ENCODE measurements at regions of chr10 and their contacts with region 1.

Region 1: DNA sequence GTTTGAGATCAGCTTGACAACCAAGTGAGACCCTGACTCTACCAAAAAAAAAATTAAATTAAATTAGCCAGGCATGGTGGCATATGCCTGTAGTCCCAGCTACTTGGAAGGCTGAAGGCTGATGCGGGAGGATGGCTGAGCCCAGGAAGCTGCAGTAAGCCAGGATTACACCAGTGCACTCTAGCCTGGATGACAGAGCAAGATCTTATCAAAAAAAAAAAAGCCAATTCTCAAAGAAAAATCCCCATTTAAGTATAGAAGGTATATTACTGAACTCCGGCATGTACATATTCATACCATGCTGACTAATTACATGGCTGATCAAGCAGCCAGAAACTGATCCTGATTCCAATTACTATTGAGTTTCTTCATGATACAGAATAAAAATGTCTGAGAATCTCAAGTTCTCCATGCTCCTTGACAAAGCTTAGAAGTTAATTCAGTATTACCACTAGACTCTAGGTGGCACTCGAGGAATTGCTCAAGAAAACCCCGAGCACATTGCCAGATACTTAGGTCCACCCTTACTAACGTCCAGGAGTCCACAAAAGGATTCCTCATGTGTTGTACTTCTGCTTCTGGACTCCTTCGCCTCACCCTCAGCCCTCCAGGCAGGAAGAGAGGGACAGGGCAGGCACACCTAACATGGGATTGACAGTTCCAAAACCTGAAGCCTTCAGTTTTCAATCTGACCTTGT is 148.9 kb downstream of the PARD3 start:
- DNase-seq: peak; percentile 41 to 78 (median 50)
- ATAC-seq: peak; percentile 97
- H3K4me3 ChIP-seq: no peak overlapping the region
- H3K27ac ChIP-seq: peak overlapping the region; percentile 48; the same call in 2 of the 3 replicates
- H3K4me1 ChIP-seq: peaks cover 6% of the 10 kb centered on the region in 2 experiments; a peak in 4 of 5 replicates
- H3K27me3 ChIP-seq: no peaks in the 10 kb centered on the region; a peak in 1 of 5 replicates
- CTCF ChIP-seq: peak; percentile 50 to 74 (median 67)
- EP300 ChIP-seq: peak; percentile 27; the same call in 1 of the 2 replicates
- POLR2A ChIP-seq: no peak
- RAD21 ChIP-seq: peak; percentile 67 to 76

Region 2: GRCh38 chr10:34547291-34547690 is 118.9 kb before region 1 on chr10:
- CTCF ChIA-PET with region 1: no interaction called
- POLR2A ChIA-PET with region 1: no interaction called
- in situ Hi-C with region 1: no loop called
- intact Hi-C with region 1: no loop called
- DNase-seq: no peak
- ATAC-seq: no peak
- H3K4me3 ChIP-seq: no peak overlapping the region
- H3K27ac ChIP-seq: no peak overlapping the region
- H3K4me1 ChIP-seq: no peaks in the 10 kb centered on the region
- H3K27me3 ChIP-seq: no peaks in the 10 kb centered on the region; a peak in 1 of 5 replicates
- CTCF ChIP-seq: no peak
- EP300 ChIP-seq: no peak
- POLR2A ChIP-seq: no peak
- RAD21 ChIP-seq: no peak

Region 3: DNA sequence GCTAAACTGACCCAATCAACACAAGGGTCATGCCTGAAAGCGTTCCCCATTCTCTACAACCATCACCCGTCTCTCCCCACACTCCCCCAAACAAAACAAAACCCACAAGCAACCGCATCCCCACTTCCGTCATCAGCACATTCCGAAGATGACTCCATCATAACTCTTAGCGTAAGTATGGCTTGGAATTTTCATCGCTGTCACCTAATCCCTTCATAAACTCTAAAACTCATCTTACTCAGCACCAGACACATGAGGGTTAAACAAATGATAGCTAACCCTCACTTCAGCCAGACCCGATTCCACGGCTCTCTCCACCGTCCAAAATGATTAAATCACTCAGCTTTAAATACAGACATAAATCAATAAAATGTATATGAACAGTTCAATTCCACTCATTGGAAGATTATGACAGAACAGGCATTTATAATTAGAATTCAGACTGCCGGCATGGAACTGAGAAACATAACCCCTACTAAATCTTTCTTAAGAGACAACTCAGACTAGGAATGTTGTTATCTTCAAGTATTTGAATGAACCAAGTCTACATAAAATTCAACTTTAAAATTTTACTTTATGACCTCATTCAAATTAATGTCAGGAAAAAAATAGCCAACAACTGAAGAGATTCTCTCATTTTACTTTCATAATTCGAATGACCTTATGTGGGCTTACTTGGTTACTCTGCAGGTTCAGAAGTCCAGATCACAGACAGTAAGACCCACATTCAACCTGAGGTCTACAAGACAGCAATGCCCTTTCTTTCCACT is 66.9 kb before region 1 on chr10:
- CTCF ChIA-PET with region 1: no interaction called
- POLR2A ChIA-PET with region 1: no interaction called
- in situ Hi-C with region 1: no loop called
- intact Hi-C with region 1: no loop called
- DNase-seq: no peak
- ATAC-seq: no peak
- H3K4me3 ChIP-seq: no peak overlapping the region
- H3K27ac ChIP-seq: no peak overlapping the region
- H3K4me1 ChIP-seq: no peaks in the 10 kb centered on the region
- H3K27me3 ChIP-seq: 0 out of 5 replicates have a peak, but pooled peaks cover 0 to 2% of the 10 kb centered on the region in 2 experiments
- CTCF ChIP-seq: no peak
- EP300 ChIP-seq: no peak
- POLR2A ChIP-seq: no peak
- RAD21 ChIP-seq: no peak

Region 4: GRCh38 chr10:34739915-34740314 is 73.8 kb after region 1 on chr10:
- CTCF ChIA-PET with region 1: no interaction called
- POLR2A ChIA-PET with region 1: no interaction called
- in situ Hi-C with region 1: no loop called
- intact Hi-C with region 1: loop called (anchors 10 kb)
- DNase-seq: peak in 2 of 4 experiments; percentile 27 to 35
- ATAC-seq: peak; percentile 86
- H3K4me3 ChIP-seq: no peak overlapping the region
- H3K27ac ChIP-seq: no peak overlapping the region
- H3K4me1 ChIP-seq: peaks cover 0 to 4% of the 10 kb centered on the region in 2 experiments; a peak in 3 of 5 replicates
- H3K27me3 ChIP-seq: peaks cover 0 to 6% of the 10 kb centered on the region in 2 experiments; a peak in 1 of 5 replicates
- CTCF ChIP-seq: no peak
- EP300 ChIP-seq: no peak
- POLR2A ChIP-seq: no peak
- RAD21 ChIP-seq: no peak

Region 5: DNA sequence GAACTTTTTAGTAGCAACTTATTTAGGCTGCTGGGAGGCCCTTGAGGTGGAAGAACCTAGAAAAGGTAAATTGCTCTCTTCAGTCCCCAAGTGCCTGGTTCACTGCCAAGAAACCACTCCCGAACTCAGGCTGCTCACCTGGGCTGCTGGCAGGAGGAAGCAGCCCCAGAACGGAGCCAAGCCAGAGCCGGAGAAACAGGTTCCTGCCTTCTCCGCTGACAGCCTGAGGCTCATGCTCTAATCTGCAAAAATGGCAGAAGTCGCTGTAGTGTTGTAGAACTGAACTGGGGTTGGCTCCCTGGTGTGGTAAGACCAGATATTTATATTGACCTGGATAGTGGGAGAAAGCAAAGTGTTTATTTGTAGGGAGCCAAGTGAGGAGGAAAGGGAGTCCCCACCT is 288.0 kb after region 1 on chr10:
- CTCF ChIA-PET with region 1: no interaction called
- POLR2A ChIA-PET with region 1: no interaction called
- in situ Hi-C with region 1: no loop called
- intact Hi-C with region 1: loop called (anchors 10 kb)
- DNase-seq: no peak
- ATAC-seq: no peak; the same call in 2 of the 3 replicates
- H3K4me3 ChIP-seq: no peak overlapping the region
- H3K27ac ChIP-seq: no peak overlapping the region
- H3K4me1 ChIP-seq: no peaks in the 10 kb centered on the region
- H3K27me3 ChIP-seq: peaks cover 9 to 42% of the 10 kb centered on the region in 2 experiments; a peak in 4 of 5 replicates
- CTCF ChIP-seq: no peak
- EP300 ChIP-seq: no peak
- POLR2A ChIP-seq: no peak
- RAD21 ChIP-seq: no peak

Region 6: DNA sequence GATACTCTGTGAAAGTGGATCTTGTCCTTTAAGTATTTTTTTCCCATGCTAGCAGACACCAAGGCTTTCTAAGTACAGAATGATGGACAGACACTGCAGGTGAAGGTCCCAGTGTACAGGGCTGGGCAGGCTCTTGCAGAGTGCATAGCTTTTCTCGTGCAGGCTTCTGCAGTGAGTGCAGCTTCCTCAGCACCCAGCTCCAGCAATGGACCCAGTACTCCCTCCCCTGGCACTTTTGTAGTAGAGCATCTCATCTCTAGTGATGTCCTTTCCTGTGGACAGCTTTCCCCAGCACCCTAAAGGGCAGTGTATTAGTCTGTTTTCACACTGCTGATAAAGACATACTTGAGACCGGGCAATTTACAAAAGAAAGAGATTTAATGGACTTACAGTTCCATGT is 319.7 kb after region 1 on chr10:
- CTCF ChIA-PET with region 1: no interaction called
- POLR2A ChIA-PET with region 1: no interaction called
- in situ Hi-C with region 1: loop called (anchors 10 kb)
- intact Hi-C with region 1: no loop called
- DNase-seq: no peak
- ATAC-seq: peak; percentile 29; the same call in 2 of the 3 replicates
- H3K4me3 ChIP-seq: no peak overlapping the region
- H3K27ac ChIP-seq: no peak overlapping the region
- H3K4me1 ChIP-seq: no peaks in the 10 kb centered on the region
- H3K27me3 ChIP-seq: no peaks in the 10 kb centered on the region
- CTCF ChIP-seq: peak in 2 of 3 experiments; percentile 10 to 12; a peak in 1 of 6 replicates
- EP300 ChIP-seq: no peak
- POLR2A ChIP-seq: no peak
- RAD21 ChIP-seq: peak in 1 of 2 experiments; percentile 30; a peak in 1 of 4 replicates

Region 7: GRCh38 chr10:35212856-35213255 is 546.7 kb after region 1 on chr10:
- CTCF ChIA-PET with region 1: no interaction called
- POLR2A ChIA-PET with region 1: no interaction called
- in situ Hi-C with region 1: loop called (anchors 5 kb)
- intact Hi-C with region 1: loop called (anchors 2 kb)
- DNase-seq: no peak
- ATAC-seq: no peak
- H3K4me3 ChIP-seq: no peak overlapping the region
- H3K27ac ChIP-seq: no peak overlapping the region
- H3K4me1 ChIP-seq: peaks cover 0 to 4% of the 10 kb centered on the region in 2 experiments; a peak in 2 of 5 replicates
- H3K27me3 ChIP-seq: no peaks in the 10 kb centered on the region
- CTCF ChIP-seq: no peak
- EP300 ChIP-seq: no peak
- POLR2A ChIP-seq: no peak
- RAD21 ChIP-seq: no peak

Region 8: GRCh38 chr10:35218339-35218955 is 552.3 kb after region 1 on chr10:
- CTCF ChIA-PET with region 1: interaction called, 3 read pairs
- POLR2A ChIA-PET with region 1: no interaction called
- in situ Hi-C with region 1: loop called (anchors 5 kb)
- intact Hi-C with region 1: loop called (anchors 2 kb)
- DNase-seq: peak; percentile 43 to 90 (median 58)
- ATAC-seq: peak; percentile 87
- H3K4me3 ChIP-seq: no peak overlapping the region
- H3K27ac ChIP-seq: no peak overlapping the region
- H3K4me1 ChIP-seq: peaks cover 0 to 4% of the 10 kb centered on the region in 2 experiments; a peak in 1 of 5 replicates
- H3K27me3 ChIP-seq: no peaks in the 10 kb centered on the region
- CTCF ChIP-seq: peak; percentile 77 to 91 (median 81)
- EP300 ChIP-seq: no peak
- POLR2A ChIP-seq: no peak
- RAD21 ChIP-seq: peak; percentile 86 to 92

Measured in K562 (cell line).